ENCODE measurements at regions of chr7 and their contacts with region 1.

Region 1: DNA sequence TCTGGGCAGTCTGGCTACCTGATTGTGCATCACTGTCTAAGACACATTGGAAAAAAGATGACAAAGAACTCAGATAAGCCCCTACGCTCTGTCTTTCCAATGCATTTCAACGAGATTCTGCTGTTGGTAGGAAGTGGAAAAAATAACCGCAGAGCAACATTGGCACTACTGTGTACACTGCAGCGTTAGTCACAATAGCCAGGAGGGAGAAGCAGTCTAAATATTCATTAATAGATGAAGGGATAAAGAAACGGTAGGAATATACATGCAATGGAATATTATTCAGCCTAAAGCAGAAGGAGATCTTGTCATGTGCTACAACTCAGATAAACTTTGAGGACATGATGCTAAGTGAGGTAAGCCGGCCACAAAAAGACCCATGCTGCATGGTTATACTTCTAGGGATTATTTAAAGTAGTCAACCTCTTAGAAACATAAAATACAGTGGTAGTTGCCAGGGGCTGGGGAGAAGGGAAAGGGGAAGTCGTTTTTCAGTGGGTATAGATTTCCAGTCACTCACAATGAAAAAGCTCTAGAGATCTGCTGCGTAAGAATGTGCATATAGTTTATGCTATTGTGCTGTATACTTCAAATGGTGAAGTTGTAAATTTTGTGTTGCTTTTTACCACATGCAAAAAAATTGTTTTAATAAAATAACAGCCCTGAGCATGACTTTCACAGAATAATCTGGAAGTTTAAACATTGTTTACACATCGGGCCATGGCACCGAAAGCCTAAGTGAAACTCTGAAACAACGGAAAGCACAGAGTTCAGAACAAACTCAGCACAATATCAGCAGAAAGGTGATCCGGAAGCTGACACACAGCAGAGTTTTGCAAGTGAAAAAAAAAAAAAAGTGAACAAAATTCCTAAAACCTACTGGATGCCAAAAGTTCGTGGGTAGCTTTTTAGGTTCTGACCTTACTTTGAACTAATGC is 40.1 kb downstream of the ELMO1 start:
- DNase-seq: peak in 7 of 9 donors; percentile 14 to 58 (median 32)
- ATAC-seq: peak; percentile 57
- H3K4me3 ChIP-seq: peak overlapping the region; percentile 29
- H3K4me3 Mint-ChIP-seq: peak overlapping the region; percentile 66 to 91 (median 88)
- H3K27ac ChIP-seq: peak overlapping the region; percentile 54
- H3K27ac Mint-ChIP-seq: peak overlapping the region; percentile 86 to 95 (median 90)
- H3K4me1 ChIP-seq: peaks cover 19 to 34% of the 10 kb centered on the region in 2 donors
- H3K4me1 Mint-ChIP-seq: peaks cover 53 to 93% (median 86%) of the 10 kb centered on the region in 7 donors
- H3K27me3 ChIP-seq: no peaks in the 10 kb centered on the region
- H3K27me3 Mint-ChIP-seq: no peaks in the 10 kb centered on the region

Region 2: GRCh38 chr7:37363536-37364491 is 44.7 kb before region 1 on chr7:
- CTCF ChIA-PET with region 1: no interaction called
- POLR2A ChIA-PET with region 1: interaction called, 3 read pairs
- intact Hi-C with region 1: loop called (anchors 2 kb)
- DNase-seq: peak in 6 of 9 donors; percentile 33 to 59 (median 43)
- ATAC-seq: peak; percentile 60
- H3K4me3 ChIP-seq: peak overlapping the region; percentile 2
- H3K4me3 Mint-ChIP-seq: peak overlapping the region; percentile 55 to 87 (median 73)
- H3K27ac ChIP-seq: peak overlapping the region; percentile 63
- H3K27ac Mint-ChIP-seq: peak overlapping the region; percentile 86 to 97 (median 92)
- H3K4me1 ChIP-seq: peaks cover 15 to 58% of the 10 kb centered on the region in 2 donors
- H3K4me1 Mint-ChIP-seq: peaks cover 48 to 96% (median 86%) of the 10 kb centered on the region in 7 donors
- H3K27me3 ChIP-seq: no peaks in the 10 kb centered on the region
- H3K27me3 Mint-ChIP-seq: no peaks in the 10 kb centered on the region

Region 3: GRCh38 chr7:37420946-37421695 is 12.6 kb after region 1 on chr7:
- CTCF ChIA-PET with region 1: no interaction called
- POLR2A ChIA-PET with region 1: interaction called, 3 read pairs
- intact Hi-C with region 1: loop called (anchors 2 kb)
- DNase-seq: no peak
- ATAC-seq: no peak
- H3K4me3 ChIP-seq: no peak overlapping the region
- H3K4me3 Mint-ChIP-seq: peak overlapping the region in 2 of 10 donors; percentile 2 to 4
- H3K27ac ChIP-seq: no peak overlapping the region
- H3K27ac Mint-ChIP-seq: peak overlapping the region in 7 of 9 donors; percentile 4 to 64 (median 19)
- H3K4me1 ChIP-seq: peaks cover 0 to 12% of the 10 kb centered on the region in 2 donors
- H3K4me1 Mint-ChIP-seq: peaks cover 31 to 68% (median 61%) of the 10 kb centered on the region in 7 donors
- H3K27me3 ChIP-seq: no peaks in the 10 kb centered on the region
- H3K27me3 Mint-ChIP-seq: no peaks in the 10 kb centered on the region